Naive thymus-derived CD4-positive, alpha-beta T cell (primary cell): ENCODE measurements at regions of chr1 and their contacts with region 1.

Region 1: GRCh38 chr1:38586993-38587646 is 272.5 kb downstream of the RRAGC start:
- DNase-seq: peak in 8 of 9 donors; percentile 10 to 60 (median 43)
- ATAC-seq: peak; percentile 71
- H3K4me3 ChIP-seq: no peak overlapping the region
- H3K4me3 Mint-ChIP-seq: peak overlapping the region in 1 of 10 donors; percentile 17
- H3K27ac ChIP-seq: no peak overlapping the region
- H3K27ac Mint-ChIP-seq: peak overlapping the region in 2 of 9 donors; percentile 19 to 49
- H3K4me1 ChIP-seq: no peaks in the 10 kb centered on the region
- H3K4me1 Mint-ChIP-seq: peaks cover 0 to 26% (median 14%) of the 10 kb centered on the region in 7 donors
- H3K27me3 ChIP-seq: no peaks in the 10 kb centered on the region
- H3K27me3 Mint-ChIP-seq: peaks cover 0 to 28% (median 10%) of the 10 kb centered on the region in 5 donors

Region 2: DNA sequence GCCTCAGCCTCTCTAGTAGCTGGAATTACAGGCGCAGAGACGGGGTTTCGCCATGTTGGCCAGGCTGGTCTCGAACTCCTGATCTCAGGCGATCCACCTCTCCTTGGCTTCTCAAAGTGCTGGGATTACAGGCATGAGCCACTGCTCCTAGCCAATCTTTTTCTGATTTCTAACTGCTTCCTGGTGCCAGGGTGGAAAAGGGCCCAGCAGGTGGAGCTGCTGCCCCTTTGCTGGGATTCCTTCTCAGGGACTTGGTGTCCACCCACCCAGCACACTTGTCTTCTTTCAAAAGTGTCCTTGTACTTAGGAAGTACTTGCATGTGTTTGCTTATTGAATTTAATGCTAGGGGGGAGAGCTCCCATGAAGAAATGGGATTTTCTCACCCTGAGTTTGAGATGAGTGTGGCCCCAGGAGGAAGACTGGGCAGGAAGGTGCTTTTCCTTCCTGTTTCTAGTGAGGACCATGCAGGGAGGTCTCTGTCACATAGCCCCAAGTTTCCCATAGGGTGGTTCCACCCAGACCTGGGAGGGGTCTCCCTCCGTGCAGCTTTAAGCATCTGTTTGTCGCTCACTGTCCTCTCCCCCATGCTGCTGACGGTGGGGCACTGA is 560.4 kb before region 1 on chr1:
- CTCF ChIA-PET with region 1: interaction called, 3 read pairs
- POLR2A ChIA-PET with region 1: no interaction called
- intact Hi-C with region 1: loop called (anchors 5 to 10 kb)
- DNase-seq: no peak
- ATAC-seq: no peak
- H3K4me3 ChIP-seq: no peak overlapping the region
- H3K4me3 Mint-ChIP-seq: no peak overlapping the region
- H3K27ac ChIP-seq: no peak overlapping the region
- H3K27ac Mint-ChIP-seq: peak overlapping the region in 2 of 9 donors; percentile 38
- H3K4me1 ChIP-seq: peaks cover 12 to 32% of the 10 kb centered on the region in 2 donors
- H3K4me1 Mint-ChIP-seq: peaks cover 11 to 45% (median 25%) of the 10 kb centered on the region in 7 donors
- H3K27me3 ChIP-seq: no peaks in the 10 kb centered on the region
- H3K27me3 Mint-ChIP-seq: no peaks in the 10 kb centered on the region

Region 3: DNA sequence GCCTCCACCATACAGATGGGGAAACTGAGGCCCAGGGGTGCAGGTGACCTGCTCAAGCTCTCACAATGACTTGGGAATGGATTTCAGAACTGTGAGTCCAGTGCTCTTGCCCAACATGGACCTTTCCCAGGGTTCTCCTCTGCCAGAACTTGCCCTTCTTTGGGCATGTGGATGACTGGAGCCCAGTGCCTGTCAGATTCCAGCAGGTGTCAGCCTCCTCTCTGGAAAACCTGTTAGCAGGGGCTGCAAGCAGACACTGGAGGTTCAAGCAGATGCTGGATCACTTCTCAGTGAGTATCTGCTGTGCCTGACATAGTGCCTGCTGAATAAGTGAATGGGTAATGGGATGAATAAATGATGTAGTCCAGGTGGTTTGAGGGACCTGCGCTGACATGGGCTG is 226.3 kb before region 1 on chr1:
- CTCF ChIA-PET with region 1: no interaction called
- POLR2A ChIA-PET with region 1: no interaction called
- intact Hi-C with region 1: loop called in 1 of 2 experiments (anchors 2 kb)
- DNase-seq: peak in 1 of 9 donors; percentile 4
- ATAC-seq: no peak
- H3K4me3 ChIP-seq: no peak overlapping the region
- H3K4me3 Mint-ChIP-seq: no peak overlapping the region
- H3K27ac ChIP-seq: no peak overlapping the region
- H3K27ac Mint-ChIP-seq: no peak overlapping the region
- H3K4me1 ChIP-seq: no peaks in the 10 kb centered on the region
- H3K4me1 Mint-ChIP-seq: no peaks in the 10 kb centered on the region
- H3K27me3 ChIP-seq: no peaks in the 10 kb centered on the region
- H3K27me3 Mint-ChIP-seq: peaks cover 0 to 12% (median 8%) of the 10 kb centered on the region in 5 donors

Region 4: DNA sequence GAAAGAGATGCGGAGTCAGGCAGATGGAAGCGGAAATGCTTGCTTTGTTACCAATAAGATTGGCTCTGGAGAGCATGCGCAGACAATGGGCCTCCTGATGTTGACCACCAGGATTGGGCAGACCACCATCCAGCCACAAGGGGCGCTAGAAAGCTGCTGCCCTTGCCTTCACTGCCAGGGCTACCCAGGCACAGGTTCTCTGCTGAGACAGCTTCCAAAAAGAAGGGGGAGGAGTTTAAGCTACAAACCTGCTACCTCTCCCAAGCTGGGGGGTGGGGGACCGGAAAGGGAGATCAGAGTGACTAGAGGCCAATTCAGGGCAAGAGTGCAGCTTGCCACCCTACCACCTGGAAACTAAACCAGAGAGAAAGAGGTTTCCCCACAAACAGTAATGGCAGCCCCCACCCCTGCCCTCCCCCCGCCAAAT is 97.3 kb before region 1 on chr1:
- CTCF ChIA-PET with region 1: no interaction called
- POLR2A ChIA-PET with region 1: no interaction called
- intact Hi-C with region 1: loop called (anchors 1 kb)
- DNase-seq: peak in 5 of 9 donors; percentile 25 to 38 (median 36)
- ATAC-seq: no peak
- H3K4me3 ChIP-seq: no peak overlapping the region
- H3K4me3 Mint-ChIP-seq: peak overlapping the region in 1 of 10 donors; percentile 43
- H3K27ac ChIP-seq: no peak overlapping the region
- H3K27ac Mint-ChIP-seq: no peak overlapping the region
- H3K4me1 ChIP-seq: no peaks in the 10 kb centered on the region
- H3K4me1 Mint-ChIP-seq: peaks cover 0 to 5% (median 4%) of the 10 kb centered on the region in 7 donors
- H3K27me3 ChIP-seq: no peaks in the 10 kb centered on the region
- H3K27me3 Mint-ChIP-seq: peaks cover 10 to 36% (median 22%) of the 10 kb centered on the region in 5 donors

Region 5: GRCh38 chr1:38527373-38527966 is 59.6 kb before region 1 on chr1:
- CTCF ChIA-PET with region 1: no interaction called
- POLR2A ChIA-PET with region 1: no interaction called
- intact Hi-C with region 1: loop called in 1 of 2 experiments (anchors 10 kb)
- DNase-seq: peak in 8 of 9 donors; percentile 24 to 65 (median 51)
- ATAC-seq: peak; percentile 65
- H3K4me3 ChIP-seq: peak overlapping the region; percentile 11
- H3K4me3 Mint-ChIP-seq: peak overlapping the region; percentile 54 to 84 (median 68)
- H3K27ac ChIP-seq: no peak overlapping the region
- H3K27ac Mint-ChIP-seq: peak overlapping the region in 7 of 9 donors; percentile 5 to 89 (median 69)
- H3K4me1 ChIP-seq: peaks cover 0 to 11% of the 10 kb centered on the region in 2 donors
- H3K4me1 Mint-ChIP-seq: peaks cover 1 to 23% (median 15%) of the 10 kb centered on the region in 7 donors
- H3K27me3 ChIP-seq: no peaks in the 10 kb centered on the region
- H3K27me3 Mint-ChIP-seq: peaks cover 0 to 14% (median 8%) of the 10 kb centered on the region in 5 donors

Region 6: GRCh38 chr1:38539931-38540330 is 47.2 kb before region 1 on chr1:
- CTCF ChIA-PET with region 1: no interaction called
- POLR2A ChIA-PET with region 1: no interaction called
- intact Hi-C with region 1: loop called in 1 of 2 experiments (anchors 5 kb)
- DNase-seq: no peak
- ATAC-seq: no peak
- H3K4me3 ChIP-seq: no peak overlapping the region
- H3K4me3 Mint-ChIP-seq: no peak overlapping the region
- H3K27ac ChIP-seq: no peak overlapping the region
- H3K27ac Mint-ChIP-seq: no peak overlapping the region
- H3K4me1 ChIP-seq: no peaks in the 10 kb centered on the region
- H3K4me1 Mint-ChIP-seq: peaks cover 0 to 4% (median 0%) of the 10 kb centered on the region in 7 donors
- H3K27me3 ChIP-seq: no peaks in the 10 kb centered on the region
- H3K27me3 Mint-ChIP-seq: peaks cover 0 to 33% (median 13%) of the 10 kb centered on the region in 5 donors

Region 7: GRCh38 chr1:38559161-38559824 is 27.8 kb before region 1 on chr1:
- CTCF ChIA-PET with region 1: no interaction called
- POLR2A ChIA-PET with region 1: no interaction called
- intact Hi-C with region 1: loop called in 1 of 2 experiments (anchors 1 kb)
- DNase-seq: peak; percentile 60 to 97 (median 95)
- ATAC-seq: peak; percentile 95
- H3K4me3 ChIP-seq: peak overlapping the region; percentile 36
- H3K4me3 Mint-ChIP-seq: peak overlapping the region; percentile 74 to 87 (median 78)
- H3K27ac ChIP-seq: peak overlapping the region; percentile 34
- H3K27ac Mint-ChIP-seq: peak overlapping the region; percentile 53 to 96 (median 93)
- H3K4me1 ChIP-seq: peaks cover 27 to 43% of the 10 kb centered on the region in 2 donors
- H3K4me1 Mint-ChIP-seq: peaks cover 37 to 76% (median 64%) of the 10 kb centered on the region in 7 donors
- H3K27me3 ChIP-seq: peaks cover 0 to 8% of the 10 kb centered on the region in 2 donors
- H3K27me3 Mint-ChIP-seq: peaks cover 15 to 51% (median 22%) of the 10 kb centered on the region in 5 donors

Region 8: DNA sequence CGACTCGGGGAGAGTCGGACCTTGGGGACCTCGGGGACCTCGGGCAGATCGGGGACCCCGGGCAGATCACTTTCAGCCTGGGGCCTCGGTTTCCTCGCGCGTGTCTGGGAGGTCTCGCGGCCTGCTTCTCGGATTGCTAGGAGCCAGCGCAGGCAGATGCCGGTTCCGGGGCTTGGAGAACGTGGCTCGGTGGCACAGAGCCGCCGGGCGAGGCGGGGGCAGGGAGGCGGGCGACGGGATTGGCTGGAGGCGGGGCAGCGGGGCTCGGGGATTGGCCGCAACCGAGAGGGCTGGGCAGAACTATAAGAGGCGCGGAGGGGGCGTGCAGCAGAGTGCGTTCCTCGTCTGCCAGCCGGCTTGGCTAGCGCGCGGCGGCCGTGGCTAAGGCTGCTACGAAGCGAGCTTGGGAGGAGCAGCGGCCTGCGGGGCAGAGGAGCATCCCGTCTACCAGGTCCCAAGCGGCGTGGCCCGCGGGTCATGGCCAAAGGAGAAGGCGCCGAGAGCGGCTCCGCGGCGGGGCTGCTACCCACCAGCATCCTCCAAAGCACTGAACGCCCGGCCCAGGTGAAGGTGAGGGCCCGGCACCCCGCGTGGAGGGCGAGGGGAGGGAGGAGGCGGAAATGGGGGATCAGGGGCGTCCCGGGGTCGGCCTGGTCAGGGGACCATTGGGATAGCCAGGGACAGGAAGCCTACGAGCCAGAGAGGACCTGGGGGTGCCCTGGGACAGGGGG is 1367.9 kb after region 1 on chr1 and contains the start of gene MFSD2A:
- CTCF ChIA-PET with region 1: no interaction called
- POLR2A ChIA-PET with region 1: no interaction called
- intact Hi-C with region 1: no loop called
- DNase-seq: peak; percentile 80 to 92 (median 86)
- ATAC-seq: peak; percentile 98
- H3K4me3 ChIP-seq: peak within 1 kb of the TSS; percentile 84
- H3K4me3 Mint-ChIP-seq: peak within 1 kb of the TSS; percentile 89 to 97 (median 94)
- H3K27ac ChIP-seq: peak within 1 kb of the TSS; percentile 28
- H3K27ac Mint-ChIP-seq: peak within 1 kb of the TSS in 8 of 9 donors; percentile 51 to 95 (median 78)
- H3K4me1 ChIP-seq: peaks cover 7 to 18% of the 10 kb centered on the region in 2 donors
- H3K4me1 Mint-ChIP-seq: peaks cover 16 to 25% (median 20%) of the 10 kb centered on the region in 7 donors
- H3K27me3 ChIP-seq: no peaks in the 10 kb centered on the region
- H3K27me3 Mint-ChIP-seq: peaks cover 0 to 7% (median 0%) of the 10 kb centered on the region in 5 donors
- total RNA-seq, gene MFSD2A: 0.70 to 8.7 (median 4.4) TPM